GM12878 (cell line): ENCODE measurements at regions of chr1 and their contacts with region 1.

Region 1: GRCh38 chr1:199684686-199685273 is 342.7 kb upstream of the NR5A2 start:
- DNase-seq: peak; percentile 8
- ATAC-seq: peak; percentile 92
- H3K4me3 ChIP-seq: no peak overlapping the region
- H3K27ac ChIP-seq: no peak overlapping the region
- H3K4me1 ChIP-seq: no peaks in the 10 kb centered on the region
- H3K27me3 ChIP-seq: peaks cover 0 to 4% of the 10 kb centered on the region in 2 experiments; a peak in 2 of 4 replicates
- CTCF ChIP-seq: peak; percentile 73 to 75 (median 74)
- EP300 ChIP-seq: no peak
- POLR2A ChIP-seq: no peak
- RAD21 ChIP-seq: peak; percentile 87

Region 2: GRCh38 chr1:199422198-199422597 is 262.6 kb before region 1 on chr1:
- CTCF ChIA-PET with region 1: no interaction called
- POLR2A ChIA-PET with region 1: no interaction called
- RAD21 ChIA-PET with region 1: no interaction called
- SMC1A ChIA-PET with region 1: no interaction called
- in situ Hi-C with region 1: no loop called
- intact Hi-C with region 1: no loop called
- DNase-seq: no peak
- ATAC-seq: peak; percentile 26; the same call in 1 of the 3 replicates
- H3K4me3 ChIP-seq: no peak overlapping the region
- H3K27ac ChIP-seq: no peak overlapping the region
- H3K4me1 ChIP-seq: no peaks in the 10 kb centered on the region
- H3K27me3 ChIP-seq: no peaks in the 10 kb centered on the region
- CTCF ChIP-seq: peak; percentile 15 to 23 (median 19); a peak in 2 of 6 replicates
- EP300 ChIP-seq: no peak
- POLR2A ChIP-seq: no peak
- RAD21 ChIP-seq: peak; percentile 31; the same call in 1 of the 2 replicates

Region 3: DNA sequence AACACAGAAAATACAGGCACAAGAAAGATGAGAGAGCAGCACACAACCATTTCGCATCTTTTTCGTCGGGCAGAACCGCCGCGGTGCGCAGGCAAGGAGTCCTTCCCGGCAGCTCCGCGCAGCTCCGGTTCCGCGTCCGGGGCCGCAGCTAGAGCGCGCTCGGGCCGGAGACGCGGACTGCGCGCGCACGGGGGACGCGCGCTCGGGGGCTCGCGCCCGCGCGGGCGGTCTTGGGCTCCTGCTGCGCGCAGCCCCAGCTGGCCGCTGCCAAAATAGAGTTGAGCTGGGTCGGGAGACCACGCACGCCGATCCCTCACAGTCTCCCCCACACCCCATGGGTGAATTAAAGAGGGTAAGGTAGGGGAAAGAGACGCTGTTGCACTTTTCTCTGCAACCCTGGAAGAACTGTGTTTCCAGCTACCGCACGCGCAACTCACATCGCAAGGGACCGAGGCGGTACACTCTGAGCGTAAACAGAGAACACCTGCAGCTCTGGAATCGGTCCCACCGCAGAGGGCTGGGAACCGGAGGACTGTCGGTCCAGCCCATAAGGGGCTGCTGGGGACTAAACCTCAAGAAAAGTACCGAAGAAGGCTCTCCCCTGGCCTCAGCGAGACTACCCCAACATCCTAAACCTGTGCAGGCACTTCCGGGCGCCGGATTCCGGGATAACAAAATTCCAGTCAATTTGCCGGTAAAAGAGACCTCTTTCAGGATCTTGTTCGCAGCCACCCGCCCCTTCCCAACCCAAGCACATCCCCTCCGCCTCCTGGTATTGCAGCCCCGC is 344.4 kb after region 1 on chr1:
- CTCF ChIA-PET with region 1: no interaction called
- POLR2A ChIA-PET with region 1: interaction called, 3 read pairs
- RAD21 ChIA-PET with region 1: no interaction called
- SMC1A ChIA-PET with region 1: no interaction called
- in situ Hi-C with region 1: no loop called
- intact Hi-C with region 1: loop called (anchors 10 kb)
- DNase-seq: no peak
- ATAC-seq: peak; percentile 59
- H3K4me3 ChIP-seq: no peak overlapping the region
- H3K27ac ChIP-seq: no peak overlapping the region
- H3K4me1 ChIP-seq: no peaks in the 10 kb centered on the region
- H3K27me3 ChIP-seq: peaks cover 6 to 17% of the 10 kb centered on the region in 2 experiments
- CTCF ChIP-seq: no peak
- EP300 ChIP-seq: no peak
- POLR2A ChIP-seq: no peak
- RAD21 ChIP-seq: no peak

Region 4: DNA sequence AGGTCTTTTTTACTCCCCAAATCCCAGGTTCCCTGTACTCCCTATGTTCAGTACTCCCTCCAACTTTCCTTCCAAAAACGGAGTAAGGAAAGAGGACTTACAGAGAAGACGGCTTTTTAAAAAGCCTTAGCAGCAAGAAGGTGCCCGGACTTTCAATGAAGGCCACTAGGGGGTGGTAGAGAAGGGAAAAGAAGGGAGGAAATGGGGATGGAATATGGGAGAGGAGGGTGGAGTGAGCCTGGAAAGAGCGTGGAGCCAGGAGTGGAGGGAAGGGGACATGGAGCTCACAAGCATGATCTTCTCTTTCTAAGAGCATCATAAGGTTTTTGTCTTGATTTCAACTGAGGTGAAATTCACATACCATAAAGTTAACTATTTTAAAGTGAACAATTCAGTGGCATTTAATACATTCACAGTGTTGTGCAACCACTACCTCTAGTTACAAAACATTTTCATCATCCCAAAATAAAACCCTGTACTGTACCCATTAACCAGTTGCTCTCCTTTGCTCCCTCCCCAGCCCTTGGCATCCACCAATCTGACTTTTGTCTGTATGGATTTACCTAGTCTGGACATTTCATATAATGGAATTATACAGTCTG is 595.1 kb after region 1 on chr1:
- CTCF ChIA-PET with region 1: interaction called, 8 read pairs
- POLR2A ChIA-PET with region 1: no interaction called
- RAD21 ChIA-PET with region 1: interaction called, 13 read pairs
- SMC1A ChIA-PET with region 1: interaction called, 23 read pairs
- in situ Hi-C with region 1: loop called (anchors 25 kb)
- intact Hi-C with region 1: loop called (anchors 1 kb)
- DNase-seq: no peak
- ATAC-seq: peak; percentile 58
- H3K4me3 ChIP-seq: no peak overlapping the region
- H3K27ac ChIP-seq: no peak overlapping the region
- H3K4me1 ChIP-seq: 0 out of 2 replicates have a peak, but pooled peaks cover 5% of the 10 kb centered on the region
- H3K27me3 ChIP-seq: no peaks in the 10 kb centered on the region; a peak in 1 of 4 replicates
- CTCF ChIP-seq: peak; percentile 66 to 72 (median 71)
- EP300 ChIP-seq: no peak
- POLR2A ChIP-seq: no peak
- RAD21 ChIP-seq: peak; percentile 83

Region 5: DNA sequence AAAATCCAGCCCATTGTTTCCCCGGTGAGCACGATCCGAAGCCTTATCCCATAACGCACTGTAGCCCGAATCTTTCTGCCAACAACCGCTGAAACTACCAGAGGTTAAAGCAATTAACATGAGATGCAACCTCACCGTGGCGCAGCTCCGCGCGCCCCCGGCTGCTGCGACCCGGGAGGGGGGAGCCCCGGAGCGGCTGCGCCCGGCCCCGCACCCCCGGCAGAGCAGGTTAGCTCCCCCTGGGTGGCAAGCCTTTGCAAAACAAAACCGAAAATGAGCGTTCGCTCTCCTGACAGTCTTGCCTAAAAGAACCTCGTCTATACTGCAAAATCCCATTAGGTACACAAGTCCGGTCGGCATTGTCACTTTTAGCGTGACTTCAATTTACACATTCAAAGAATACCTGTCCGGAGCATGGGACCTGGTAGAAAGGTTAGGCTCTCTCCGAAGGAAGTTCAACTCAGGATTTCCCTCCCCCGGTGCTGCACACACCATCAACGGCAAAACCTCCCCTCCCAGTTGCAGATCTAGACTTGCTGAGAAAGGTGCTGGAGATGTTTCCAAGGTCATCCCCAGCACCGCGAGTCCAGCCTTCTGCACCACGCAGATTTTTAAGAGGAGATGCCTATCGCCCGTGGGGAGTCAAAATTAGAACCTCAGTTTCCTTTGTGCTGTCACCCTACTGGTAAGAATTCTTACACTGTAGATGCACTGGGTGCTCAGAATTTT is 617.6 kb after region 1 on chr1:
- CTCF ChIA-PET with region 1: interaction called, 5 read pairs
- POLR2A ChIA-PET with region 1: no interaction called
- RAD21 ChIA-PET with region 1: interaction called, 5 read pairs
- SMC1A ChIA-PET with region 1: interaction called, 3 read pairs
- in situ Hi-C with region 1: loop called (anchors 25 kb)
- intact Hi-C with region 1: loop called (anchors 1 kb)
- DNase-seq: no peak
- ATAC-seq: peak; percentile 80
- H3K4me3 ChIP-seq: peak overlapping the region; percentile 81
- H3K27ac ChIP-seq: no peak overlapping the region
- H3K4me1 ChIP-seq: peaks cover 22% of the 10 kb centered on the region
- H3K27me3 ChIP-seq: peaks cover 0 to 4% of the 10 kb centered on the region in 2 experiments; a peak in 2 of 4 replicates
- CTCF ChIP-seq: 0 out of 6 replicates have a peak, but pooled peaks of 1 of the 3 experiments have one; percentile 2
- EP300 ChIP-seq: no peak
- POLR2A ChIP-seq: no peak
- RAD21 ChIP-seq: 0 out of 2 replicates have a peak, but pooled peaks have one; percentile 20

Region 6: DNA sequence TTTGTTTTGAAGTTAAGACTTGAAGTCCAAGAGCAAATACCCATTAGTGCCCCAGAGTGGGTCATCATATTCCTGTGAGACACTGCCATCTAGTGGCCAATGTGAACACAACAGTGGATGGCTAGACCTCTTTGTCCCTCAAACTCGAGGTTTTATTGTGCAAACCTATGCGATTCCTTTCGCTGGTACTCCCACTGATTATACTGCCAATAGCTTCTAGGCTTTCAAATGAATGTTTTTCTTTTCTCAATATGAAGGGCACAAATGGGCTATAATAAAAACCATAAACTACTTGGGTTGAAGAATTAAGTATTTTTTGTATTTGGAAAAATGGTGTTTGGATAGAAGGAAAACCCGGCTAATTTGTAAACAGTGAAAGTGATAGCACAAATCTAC is 825.4 kb after region 1 on chr1:
- CTCF ChIA-PET with region 1: interaction called, 11 read pairs
- POLR2A ChIA-PET with region 1: no interaction called
- RAD21 ChIA-PET with region 1: interaction called, 4 read pairs
- SMC1A ChIA-PET with region 1: interaction called, 12 read pairs
- in situ Hi-C with region 1: loop called (anchors 5 kb)
- intact Hi-C with region 1: loop called (anchors 1 kb)
- DNase-seq: peak; percentile 39
- ATAC-seq: peak; percentile 99
- H3K4me3 ChIP-seq: no peak overlapping the region
- H3K27ac ChIP-seq: no peak overlapping the region
- H3K4me1 ChIP-seq: no peaks in the 10 kb centered on the region
- H3K27me3 ChIP-seq: no peaks in the 10 kb centered on the region; a peak in 2 of 4 replicates
- CTCF ChIP-seq: peak; percentile 75 to 95 (median 83)
- EP300 ChIP-seq: no peak
- POLR2A ChIP-seq: no peak
- RAD21 ChIP-seq: peak; percentile 97